GM18951 (cell line): ENCODE measurements at regions of chr15 and their contacts with region 1.

Region 1: DNA sequence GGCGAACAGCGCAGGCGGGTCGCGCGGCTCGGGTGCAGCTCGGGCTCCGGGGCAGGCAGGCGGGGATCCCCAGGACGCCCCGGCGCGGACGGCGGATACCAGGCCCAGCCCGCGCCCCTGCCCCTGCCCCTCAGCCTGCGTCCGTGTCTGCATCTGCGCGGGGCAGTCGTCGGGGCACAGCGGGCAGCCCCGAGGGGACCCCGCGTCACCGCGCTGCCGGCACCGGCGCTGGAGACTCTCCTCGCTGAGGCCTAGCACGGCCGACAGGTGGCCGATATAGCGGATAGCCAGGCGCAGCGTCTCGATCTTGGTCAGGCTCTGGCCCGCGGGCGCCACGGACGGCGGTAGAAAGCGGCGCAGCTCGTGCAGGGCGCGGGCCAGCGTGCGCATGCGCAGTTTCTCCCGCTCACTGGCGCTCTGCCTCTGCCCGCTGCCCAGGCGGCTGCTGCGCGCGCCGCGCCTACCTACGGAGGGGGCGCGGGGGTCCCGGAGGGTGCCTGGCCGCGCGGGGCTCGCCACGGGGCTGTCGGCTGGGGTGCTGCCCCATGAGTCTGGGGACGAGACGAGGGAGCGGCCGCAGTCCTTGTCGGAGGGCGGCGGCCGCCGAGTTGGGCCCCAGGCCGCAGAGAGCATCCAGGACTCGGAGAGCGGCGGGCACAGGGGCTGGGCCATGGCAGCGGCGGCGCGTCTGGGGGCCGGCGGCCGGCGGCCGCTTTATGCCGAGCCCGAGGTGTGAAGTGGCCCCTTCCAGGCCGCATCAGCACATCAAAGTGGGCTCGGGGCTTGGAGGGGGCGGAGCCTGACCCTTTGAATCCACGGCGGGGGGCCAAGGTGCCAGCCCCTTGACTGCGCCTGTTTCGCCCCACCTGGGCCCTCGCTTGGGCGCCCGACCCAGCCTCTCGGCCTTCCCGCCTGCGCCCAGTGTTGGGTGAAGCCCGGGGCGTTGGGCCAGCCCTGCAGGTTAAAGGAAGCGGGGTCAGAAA is at the start of gene MESP1:
- POLR2A ChIP-seq: peak; percentile 66

Region 2: DNA sequence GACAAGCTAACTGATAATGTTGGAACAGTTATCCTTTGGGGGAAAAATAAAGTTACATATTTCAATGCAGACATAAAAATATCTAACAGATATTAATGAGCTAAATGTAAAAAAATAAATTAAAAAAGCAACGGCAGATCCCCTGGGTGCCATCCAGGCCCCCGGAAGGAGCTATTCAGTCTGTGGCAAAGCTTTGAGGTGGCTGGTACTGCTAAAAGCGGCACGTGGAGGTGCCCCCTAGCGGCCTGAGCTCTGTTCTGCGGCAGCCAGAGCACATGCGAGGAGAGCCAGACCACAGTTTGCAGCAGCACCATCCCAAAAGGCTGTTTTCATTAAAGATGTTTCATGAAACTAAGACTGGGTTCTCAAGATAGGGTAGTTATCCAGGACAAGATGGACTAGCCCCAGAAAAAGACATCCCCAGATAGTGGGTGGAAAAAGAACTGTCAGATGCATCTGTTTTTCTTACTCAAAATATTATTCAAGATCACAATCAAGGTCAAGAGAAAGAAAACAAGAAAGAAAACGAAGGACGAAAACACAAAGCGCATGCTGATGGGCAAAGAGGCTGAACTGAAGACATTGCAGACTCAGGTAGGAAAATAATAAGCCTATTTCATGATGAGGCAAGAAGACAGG is 124.2 kb after region 1 on chr15:
- in situ Hi-C with region 1: loop called (anchors 5 kb)
- POLR2A ChIP-seq: no peak

Region 3: DNA sequence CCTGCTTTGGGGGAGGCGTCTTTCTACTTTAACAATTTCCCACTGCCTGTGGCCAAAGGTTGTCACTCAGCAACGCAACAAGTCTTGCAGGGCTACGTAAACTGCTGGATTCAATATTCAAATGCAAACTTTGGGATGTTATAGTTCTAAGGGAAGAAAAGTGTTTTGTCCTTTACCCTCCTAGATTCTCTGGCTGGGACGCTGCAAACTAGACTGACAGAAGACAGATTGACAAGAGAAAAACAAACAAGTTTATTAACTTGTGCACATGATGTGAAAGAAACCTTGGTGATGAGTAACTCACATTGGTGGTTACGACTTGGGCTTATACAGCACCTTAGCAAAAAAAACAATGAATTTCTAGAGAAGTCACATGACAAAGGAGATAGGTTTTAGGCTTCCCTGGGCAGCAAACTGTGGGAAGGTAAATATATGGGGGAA is 195.9 kb after region 1 on chr15:
- in situ Hi-C with region 1: no loop called
- POLR2A ChIP-seq: no peak

Region 4: DNA sequence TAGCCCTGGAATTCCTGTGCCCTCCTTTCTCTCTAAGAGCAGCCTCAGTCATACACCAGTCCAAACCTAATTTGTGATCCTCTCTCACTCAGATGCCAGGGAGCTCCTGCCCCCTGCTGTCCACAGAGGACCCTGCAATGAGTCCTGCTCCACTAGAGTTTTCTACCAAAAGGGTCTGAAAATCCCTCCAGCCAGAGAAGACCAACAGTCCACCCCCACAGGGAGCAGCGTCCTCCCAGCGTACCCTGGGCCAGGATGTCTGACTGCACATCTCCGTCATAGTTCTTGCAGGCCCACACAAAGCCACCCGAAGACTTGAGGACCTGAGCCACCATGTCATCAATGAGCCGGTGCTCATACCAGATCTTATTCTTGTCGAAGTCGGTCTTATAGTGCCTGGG is 336.0 kb after region 1 on chr15:
- in situ Hi-C with region 1: loop called (anchors 10 kb)
- POLR2A ChIP-seq: no peak